CD4-positive, alpha-beta memory T cell (primary cell): ENCODE measurements at regions of chr11 and their contacts with region 1.

Region 1: GRCh38 chr11:5891216-5891800 is 1.7 kb upstream of the OR52E5 start:
- DNase-seq: peak in 3 of 5 donors; percentile 1 to 4 (median 2)
- H3K4me3 ChIP-seq: no peak overlapping the region
- H3K4me3 Mint-ChIP-seq: no peak overlapping the region
- H3K27ac ChIP-seq: no peak overlapping the region
- H3K27ac Mint-ChIP-seq: no peak overlapping the region
- H3K4me1 ChIP-seq: no peaks in the 10 kb centered on the region
- H3K4me1 Mint-ChIP-seq: no peaks in the 10 kb centered on the region
- H3K27me3 ChIP-seq: no peaks in the 10 kb centered on the region
- H3K27me3 Mint-ChIP-seq: peaks cover 0 to 10% of the 10 kb centered on the region in 2 donors

Region 2: DNA sequence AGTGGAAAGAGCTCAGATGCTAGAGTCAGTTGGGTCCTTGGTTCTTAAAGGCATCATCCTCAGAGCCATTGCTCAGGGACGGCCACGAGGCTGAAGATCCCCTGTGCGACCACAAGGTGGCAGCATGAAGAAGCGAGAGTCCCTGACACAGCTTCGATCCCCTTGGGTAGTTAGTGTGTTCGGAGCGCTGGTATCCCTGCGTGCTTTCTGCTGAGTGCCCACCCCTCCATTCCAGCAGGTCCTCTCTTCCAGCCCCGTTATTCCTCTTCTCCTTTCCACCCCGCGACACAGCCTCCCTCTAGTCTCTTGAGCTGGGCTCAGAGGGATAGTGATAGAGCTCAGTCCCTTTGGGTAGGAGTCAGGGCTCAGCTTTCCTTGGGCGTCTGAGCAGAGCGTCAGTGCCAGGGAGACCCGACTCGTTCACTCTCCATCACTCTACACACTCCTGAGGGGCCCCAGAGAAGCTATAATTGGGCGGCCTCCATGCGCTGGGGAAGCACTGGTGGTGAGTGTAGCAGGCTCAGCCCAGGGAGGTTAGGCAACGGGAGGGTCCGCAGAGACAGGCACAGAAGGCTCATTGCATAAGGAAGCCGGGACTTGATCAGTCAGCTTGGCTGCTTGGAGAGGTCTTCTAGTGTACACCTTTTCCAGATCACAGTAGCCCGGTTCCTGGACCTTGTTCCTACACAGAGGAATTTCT is 1254.2 kb before region 1 on chr11 and contains the start of gene OR51D1:
- CTCF ChIA-PET with region 1: interaction called, 5 read pairs
- POLR2A ChIA-PET with region 1: no interaction called
- intact Hi-C with region 1: loop called (anchors 2 kb)
- DNase-seq: peak; percentile 47 to 63 (median 59)
- H3K4me3 ChIP-seq: no peak within 1 kb of the TSS
- H3K4me3 Mint-ChIP-seq: no peak within 1 kb of the TSS
- H3K27ac ChIP-seq: no peak within 1 kb of the TSS
- H3K27ac Mint-ChIP-seq: no peak within 1 kb of the TSS
- H3K4me1 ChIP-seq: no peaks in the 10 kb centered on the region
- H3K4me1 Mint-ChIP-seq: no peaks in the 10 kb centered on the region
- H3K27me3 ChIP-seq: no peaks in the 10 kb centered on the region
- H3K27me3 Mint-ChIP-seq: peaks cover 6 to 9% of the 10 kb centered on the region in 2 donors
- total RNA-seq, gene OR51D1: not detected

Region 3: DNA sequence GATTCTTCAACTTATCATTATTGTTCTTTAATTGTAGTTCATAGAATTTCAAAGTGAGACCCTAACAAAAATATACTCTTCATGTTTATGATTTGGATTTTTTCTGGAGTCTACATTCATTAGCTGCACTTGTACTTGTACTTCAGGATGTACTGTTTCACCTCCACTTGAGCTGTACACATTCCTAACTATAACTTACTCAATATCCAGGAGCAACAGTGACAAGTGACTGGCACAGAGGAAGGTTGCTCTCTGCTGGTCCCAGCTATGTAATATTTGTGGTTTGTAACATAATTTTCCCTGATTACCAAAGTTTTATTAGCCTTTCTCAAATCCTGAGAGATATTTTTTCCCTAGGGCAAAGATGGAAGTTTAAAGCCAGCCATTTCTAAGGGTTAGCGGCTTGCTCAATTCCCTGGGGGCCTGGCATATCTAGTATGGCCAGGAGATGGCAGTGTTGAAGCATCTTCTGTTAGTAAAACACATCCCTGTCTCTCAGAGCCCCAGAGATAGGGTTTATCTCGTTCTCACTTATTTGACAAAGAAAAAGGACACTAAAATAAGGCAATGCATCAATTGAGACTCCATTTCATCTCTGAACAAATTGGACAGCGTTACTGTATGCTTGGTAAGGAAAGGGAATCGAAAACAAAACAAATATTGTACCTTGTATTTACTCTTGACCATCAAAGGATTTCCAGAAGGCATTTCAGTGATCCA is 767.3 kb before region 1 on chr11:
- CTCF ChIA-PET with region 1: interaction called, 4 read pairs
- POLR2A ChIA-PET with region 1: no interaction called
- intact Hi-C with region 1: loop called (anchors 1 kb)
- DNase-seq: peak in 4 of 5 donors; percentile 23 to 36 (median 32)
- H3K4me3 ChIP-seq: no peak overlapping the region
- H3K4me3 Mint-ChIP-seq: no peak overlapping the region
- H3K27ac ChIP-seq: no peak overlapping the region
- H3K27ac Mint-ChIP-seq: no peak overlapping the region
- H3K4me1 ChIP-seq: no peaks in the 10 kb centered on the region
- H3K4me1 Mint-ChIP-seq: no peaks in the 10 kb centered on the region
- H3K27me3 ChIP-seq: no peaks in the 10 kb centered on the region
- H3K27me3 Mint-ChIP-seq: peaks cover 9 to 12% of the 10 kb centered on the region in 2 donors

Region 4: DNA sequence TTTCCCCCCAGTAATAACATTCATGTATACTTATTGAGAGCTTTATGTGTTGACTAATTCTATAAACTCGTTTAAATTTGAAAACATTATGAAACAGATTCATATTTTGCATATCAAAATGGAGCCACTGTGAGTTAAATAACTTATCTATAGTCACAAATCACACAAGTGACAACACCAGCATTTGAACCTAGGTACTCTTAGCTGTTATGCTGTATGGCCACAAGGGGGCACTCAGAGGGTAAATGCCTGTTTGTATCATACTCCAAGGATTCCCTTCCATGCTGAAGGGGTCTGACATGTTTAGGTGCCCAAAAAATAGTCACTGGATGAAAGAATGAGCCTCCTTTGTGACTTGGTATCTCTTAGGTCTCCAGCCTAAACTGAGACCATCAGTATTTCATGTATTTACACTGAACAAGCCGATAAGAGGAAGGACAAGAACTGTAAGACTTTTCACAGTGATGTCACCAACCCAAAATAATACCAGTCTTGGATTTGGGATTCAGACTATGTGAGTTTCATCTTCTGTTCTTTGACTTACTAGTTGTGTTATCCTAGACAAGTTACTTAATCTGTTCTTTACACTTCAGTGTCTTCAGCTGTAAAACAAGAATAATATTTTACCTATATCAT is 415.0 kb before region 1 on chr11:
- CTCF ChIA-PET with region 1: interaction called, 4 read pairs
- POLR2A ChIA-PET with region 1: no interaction called
- intact Hi-C with region 1: loop called (anchors 10 kb)
- DNase-seq: peak in 4 of 5 donors; percentile 18 to 39 (median 30)
- H3K4me3 ChIP-seq: no peak overlapping the region
- H3K4me3 Mint-ChIP-seq: no peak overlapping the region
- H3K27ac ChIP-seq: no peak overlapping the region
- H3K27ac Mint-ChIP-seq: no peak overlapping the region
- H3K4me1 ChIP-seq: no peaks in the 10 kb centered on the region
- H3K4me1 Mint-ChIP-seq: no peaks in the 10 kb centered on the region
- H3K27me3 ChIP-seq: no peaks in the 10 kb centered on the region
- H3K27me3 Mint-ChIP-seq: peaks cover 7 to 12% of the 10 kb centered on the region in 2 donors

Region 5: DNA sequence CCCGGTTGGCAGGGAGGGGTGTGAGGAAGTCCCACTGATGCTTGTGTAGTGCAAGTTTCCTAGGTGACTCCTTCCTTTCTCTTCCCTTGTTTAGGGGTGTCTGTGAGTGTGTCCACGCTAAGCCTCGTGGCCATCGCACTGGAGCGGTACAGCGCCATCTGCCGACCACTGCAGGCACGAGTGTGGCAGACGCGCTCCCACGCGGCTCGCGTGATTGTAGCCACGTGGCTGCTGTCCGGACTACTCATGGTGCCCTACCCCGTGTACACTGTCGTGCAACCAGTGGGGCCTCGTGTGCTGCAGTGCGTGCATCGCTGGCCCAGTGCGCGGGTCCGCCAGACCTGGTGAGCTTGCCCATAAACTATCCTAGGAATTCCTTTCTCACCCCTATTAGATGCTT is 378.7 kb after region 1 on chr11:
- CTCF ChIA-PET with region 1: no interaction called
- POLR2A ChIA-PET with region 1: no interaction called
- intact Hi-C with region 1: no loop called
- DNase-seq: no peak
- H3K4me3 ChIP-seq: no peak overlapping the region
- H3K4me3 Mint-ChIP-seq: no peak overlapping the region
- H3K27ac ChIP-seq: no peak overlapping the region
- H3K27ac Mint-ChIP-seq: no peak overlapping the region
- H3K4me1 ChIP-seq: no peaks in the 10 kb centered on the region
- H3K4me1 Mint-ChIP-seq: no peaks in the 10 kb centered on the region
- H3K27me3 ChIP-seq: no peaks in the 10 kb centered on the region
- H3K27me3 Mint-ChIP-seq: peaks cover 25 to 26% of the 10 kb centered on the region in 2 donors